Astrocyte of the cerebellum (primary cell): ENCODE measurements at regions of chr4 and their contacts with region 1.

Region 1: DNA sequence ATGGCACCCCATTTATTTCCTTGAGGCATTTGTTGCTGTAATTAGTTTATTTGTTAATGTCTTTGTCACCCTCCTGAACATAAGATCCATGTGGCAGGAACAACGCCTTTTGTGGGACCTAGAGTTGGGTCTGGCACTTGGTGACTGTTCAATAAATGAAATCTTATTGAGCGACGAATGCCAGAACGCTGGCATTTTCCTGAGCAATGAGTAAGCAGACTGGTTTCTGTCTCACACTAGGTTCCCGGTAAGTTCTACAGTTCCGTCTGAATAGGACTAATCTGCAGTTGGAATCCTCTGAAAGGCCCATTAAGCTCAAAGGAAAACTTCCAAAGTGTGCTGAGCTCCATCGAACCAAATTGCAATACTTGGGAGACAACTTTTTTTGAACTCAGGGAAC is 49.2 kb downstream of the GATB start:
- DNase-seq: no peak
- H3K4me3 ChIP-seq: no peak overlapping the region
- CTCF ChIP-seq: no peak

Region 2: GRCh38 chr4:151806511-151806927 is 94.9 kb after region 1 on chr4:
- in situ Hi-C with region 1: loop called (anchors 5 kb)
- DNase-seq: peak; percentile 59
- H3K4me3 ChIP-seq: no peak overlapping the region
- CTCF ChIP-seq: no peak